H1 (cell line): ENCODE measurements at regions of chr1 and their contacts with region 1.

Region 1: GRCh38 chr1:104132382-104132973 is 382.8 kb downstream of the AMY1C start:
- DNase-seq: no peak
- H3K4me3 ChIP-seq: no peak overlapping the region
- H3K27ac ChIP-seq: no peak overlapping the region
- H3K4me1 ChIP-seq: no peaks in the 10 kb centered on the region
- H3K27me3 ChIP-seq: no peaks in the 10 kb centered on the region
- CTCF ChIP-seq: peak in 2 of 3 experiments; percentile 65 to 81; a peak in 3 of 4 replicates
- EP300 ChIP-seq: no peak
- POLR2A ChIP-seq: no peak
- RAD21 ChIP-seq: peak; percentile 78 to 85

Region 2: DNA sequence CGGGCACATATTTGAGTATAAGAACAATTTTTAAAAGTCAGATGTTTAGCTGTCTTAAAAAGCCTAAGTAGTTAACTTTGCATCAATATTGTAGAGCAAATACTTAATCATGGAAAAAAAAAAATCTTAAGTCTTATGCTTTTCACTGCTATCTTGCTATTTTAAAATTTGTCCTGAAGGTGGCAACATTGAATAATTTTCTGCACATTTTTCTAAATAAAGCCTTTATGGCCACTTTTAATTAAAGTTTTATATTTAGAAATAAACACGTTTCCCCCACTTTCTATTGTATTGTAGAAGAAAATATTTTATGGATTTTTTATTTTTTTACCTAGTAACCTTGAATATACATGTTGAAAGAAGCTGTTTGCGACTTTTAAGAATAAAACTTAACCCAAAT is 184.0 kb before region 1 on chr1:
- CTCF ChIA-PET with region 1: interaction called, 10 read pairs
- POLR2A ChIA-PET with region 1: no interaction called
- DNase-seq: no peak
- H3K4me3 ChIP-seq: no peak overlapping the region
- H3K27ac ChIP-seq: no peak overlapping the region
- H3K4me1 ChIP-seq: no peaks in the 10 kb centered on the region
- H3K27me3 ChIP-seq: no peaks in the 10 kb centered on the region
- CTCF ChIP-seq: no peak; a peak in 1 of 4 replicates
- EP300 ChIP-seq: no peak
- POLR2A ChIP-seq: no peak
- RAD21 ChIP-seq: peak in 1 of 2 experiments; percentile 40; a peak in 3 of 4 replicates

Region 3: DNA sequence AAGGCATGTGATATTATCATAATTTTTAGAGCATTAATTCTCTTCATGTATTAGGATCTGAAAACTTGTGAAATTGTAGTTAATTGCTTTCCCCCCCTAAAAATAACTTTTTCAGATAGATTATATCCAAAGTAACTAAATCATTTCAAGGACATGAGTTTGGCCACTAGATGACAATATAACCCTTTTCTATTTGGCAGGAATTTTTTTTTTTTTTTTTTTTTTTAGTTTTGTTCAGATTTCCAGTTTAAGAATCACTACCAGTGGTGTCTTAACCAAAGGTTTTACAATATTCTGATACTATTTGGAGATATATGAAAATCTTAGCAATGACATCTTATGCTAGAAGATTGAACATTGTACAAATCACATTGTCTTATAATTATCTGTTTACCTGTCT is 12.0 kb before region 1 on chr1:
- CTCF ChIA-PET with region 1: interaction called, 10 read pairs
- POLR2A ChIA-PET with region 1: no interaction called
- DNase-seq: no peak
- H3K4me3 ChIP-seq: no peak overlapping the region
- H3K27ac ChIP-seq: no peak overlapping the region
- H3K4me1 ChIP-seq: no peaks in the 10 kb centered on the region
- H3K27me3 ChIP-seq: no peaks in the 10 kb centered on the region
- CTCF ChIP-seq: peak in 1 of 3 experiments; percentile 6; a peak in 2 of 4 replicates
- EP300 ChIP-seq: no peak
- POLR2A ChIP-seq: no peak
- RAD21 ChIP-seq: peak in 1 of 2 experiments; percentile 47; a peak in 3 of 4 replicates

Region 4: GRCh38 chr1:104156738-104157137 is 24.3 kb after region 1 on chr1:
- CTCF ChIA-PET with region 1: no interaction called
- POLR2A ChIA-PET with region 1: no interaction called
- DNase-seq: no peak
- H3K4me3 ChIP-seq: no peak overlapping the region
- H3K27ac ChIP-seq: no peak overlapping the region
- H3K4me1 ChIP-seq: no peaks in the 10 kb centered on the region
- H3K27me3 ChIP-seq: no peaks in the 10 kb centered on the region
- CTCF ChIP-seq: no peak
- EP300 ChIP-seq: no peak
- POLR2A ChIP-seq: no peak
- RAD21 ChIP-seq: no peak

Region 5: GRCh38 chr1:104182251-104182650 is 49.8 kb after region 1 on chr1:
- CTCF ChIA-PET with region 1: no interaction called
- POLR2A ChIA-PET with region 1: no interaction called
- DNase-seq: no peak
- H3K4me3 ChIP-seq: no peak overlapping the region
- H3K27ac ChIP-seq: no peak overlapping the region
- H3K4me1 ChIP-seq: no peaks in the 10 kb centered on the region
- H3K27me3 ChIP-seq: no peaks in the 10 kb centered on the region
- CTCF ChIP-seq: no peak
- EP300 ChIP-seq: no peak
- POLR2A ChIP-seq: no peak
- RAD21 ChIP-seq: no peak

Region 6: GRCh38 chr1:104248385-104248784 is 115.9 kb after region 1 on chr1:
- CTCF ChIA-PET with region 1: no interaction called
- POLR2A ChIA-PET with region 1: no interaction called
- DNase-seq: no peak
- H3K4me3 ChIP-seq: no peak overlapping the region
- H3K27ac ChIP-seq: no peak overlapping the region
- H3K4me1 ChIP-seq: no peaks in the 10 kb centered on the region
- H3K27me3 ChIP-seq: no peaks in the 10 kb centered on the region
- CTCF ChIP-seq: no peak
- EP300 ChIP-seq: no peak
- POLR2A ChIP-seq: no peak
- RAD21 ChIP-seq: no peak

Region 7: DNA sequence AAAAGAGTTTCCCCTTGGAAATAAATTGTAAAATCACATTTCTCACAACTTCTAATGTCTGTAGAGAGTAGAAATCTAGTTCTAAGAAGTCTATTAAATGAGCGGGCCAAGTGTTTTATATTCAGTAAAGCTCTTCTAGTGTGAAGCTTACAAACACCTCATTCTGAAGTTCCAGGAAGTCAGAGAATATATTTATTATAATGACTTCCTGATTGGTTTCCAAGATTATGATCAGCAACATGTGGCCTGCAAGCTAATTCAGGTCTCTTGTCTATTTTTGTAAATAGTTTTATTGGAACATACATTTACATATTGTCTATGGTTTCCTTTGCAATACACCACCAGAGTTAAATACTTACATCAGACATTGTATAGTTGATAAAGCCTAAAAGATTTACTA is 221.1 kb after region 1 on chr1:
- CTCF ChIA-PET with region 1: no interaction called
- POLR2A ChIA-PET with region 1: no interaction called
- DNase-seq: no peak
- H3K4me3 ChIP-seq: no peak overlapping the region
- H3K27ac ChIP-seq: no peak overlapping the region
- H3K4me1 ChIP-seq: no peaks in the 10 kb centered on the region
- H3K27me3 ChIP-seq: no peaks in the 10 kb centered on the region
- CTCF ChIP-seq: no peak
- EP300 ChIP-seq: no peak
- POLR2A ChIP-seq: no peak
- RAD21 ChIP-seq: no peak